Calu3 (cell line): ENCODE measurements at regions of chr6 and their contacts with region 1.

Region 1: GRCh38 chr6:142374965-142375733 is 73.3 kb downstream of the ADGRG6 start:
- DNase-seq: peak; percentile 24
- H3K4me3 Mint-ChIP-seq: no peak overlapping the region
- H3K27ac Mint-ChIP-seq: peak overlapping the region; percentile 79
- H3K4me1 Mint-ChIP-seq: peaks cover 57% of the 10 kb centered on the region
- H3K27me3 Mint-ChIP-seq: no peaks in the 10 kb centered on the region
- CTCF ChIP-seq: no peak

Region 2: GRCh38 chr6:142112451-142113061 is 262.6 kb before region 1 on chr6:
- CTCF ChIA-PET with region 1: no interaction called
- intact Hi-C with region 1: no loop called
- DNase-seq: peak; percentile 70
- H3K4me3 Mint-ChIP-seq: no peak overlapping the region
- H3K27ac Mint-ChIP-seq: no peak overlapping the region
- H3K4me1 Mint-ChIP-seq: no peaks in the 10 kb centered on the region
- H3K27me3 Mint-ChIP-seq: no peaks in the 10 kb centered on the region
- CTCF ChIP-seq: peak; percentile 38

Region 3: DNA sequence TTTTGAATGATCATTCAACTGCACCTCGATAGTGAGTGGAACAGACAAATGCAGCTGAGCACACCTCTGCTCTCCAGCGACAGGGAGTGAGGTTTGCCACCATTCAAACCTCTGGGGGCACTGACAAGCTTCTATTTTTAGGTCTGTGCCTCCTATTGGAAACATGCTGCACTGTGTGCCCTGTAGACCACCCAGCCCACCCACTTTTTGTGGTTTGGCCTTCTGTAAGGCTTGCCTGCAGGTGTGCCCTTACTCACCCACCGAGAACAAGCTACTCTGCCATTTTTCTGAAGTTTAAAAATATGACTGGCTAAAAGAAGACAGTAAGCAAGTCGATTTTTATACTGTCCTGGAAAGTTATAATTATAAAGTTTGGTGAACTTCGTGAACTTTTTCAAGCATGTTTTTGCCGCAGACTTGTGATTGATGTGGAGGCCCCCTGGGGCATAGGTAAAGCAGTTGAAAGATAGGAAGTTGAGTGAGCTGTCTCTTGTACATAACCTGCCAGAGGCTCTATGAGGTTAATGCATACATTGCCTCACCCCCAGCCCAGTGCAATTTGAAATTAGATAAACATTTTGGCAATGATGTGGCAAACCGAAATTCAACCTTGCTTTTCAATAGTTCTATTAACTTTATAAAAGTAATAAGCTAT is 19.5 kb before region 1 on chr6:
- CTCF ChIA-PET with region 1: no interaction called
- intact Hi-C with region 1: loop called (anchors 2 kb)
- DNase-seq: no peak
- H3K4me3 Mint-ChIP-seq: no peak overlapping the region
- H3K27ac Mint-ChIP-seq: no peak overlapping the region
- H3K4me1 Mint-ChIP-seq: peaks cover 13% of the 10 kb centered on the region
- H3K27me3 Mint-ChIP-seq: no peaks in the 10 kb centered on the region
- CTCF ChIP-seq: no peak

Region 4: GRCh38 chr6:142500250-142500786 is 125.2 kb after region 1 on chr6:
- CTCF ChIA-PET with region 1: no interaction called
- intact Hi-C with region 1: no loop called
- DNase-seq: no peak
- H3K4me3 Mint-ChIP-seq: no peak overlapping the region
- H3K27ac Mint-ChIP-seq: no peak overlapping the region
- H3K4me1 Mint-ChIP-seq: no peaks in the 10 kb centered on the region
- H3K27me3 Mint-ChIP-seq: peaks cover 28% of the 10 kb centered on the region
- CTCF ChIP-seq: no peak